GM12878 (cell line): ENCODE measurements at regions of chr4 and their contacts with region 1.

Region 1: GRCh38 chr4:17447675-17448298 is 64.1 kb downstream of the QDPR start:
- DNase-seq: peak; percentile 37
- ATAC-seq: peak; percentile 99
- H3K4me3 ChIP-seq: no peak overlapping the region
- H3K27ac ChIP-seq: no peak overlapping the region
- H3K4me1 ChIP-seq: no peaks in the 10 kb centered on the region
- H3K27me3 ChIP-seq: no peaks in the 10 kb centered on the region
- CTCF ChIP-seq: peak; percentile 69 to 74 (median 71); a peak in 5 of 6 replicates
- EP300 ChIP-seq: no peak
- POLR2A ChIP-seq: no peak
- RAD21 ChIP-seq: peak; percentile 84

Region 2: DNA sequence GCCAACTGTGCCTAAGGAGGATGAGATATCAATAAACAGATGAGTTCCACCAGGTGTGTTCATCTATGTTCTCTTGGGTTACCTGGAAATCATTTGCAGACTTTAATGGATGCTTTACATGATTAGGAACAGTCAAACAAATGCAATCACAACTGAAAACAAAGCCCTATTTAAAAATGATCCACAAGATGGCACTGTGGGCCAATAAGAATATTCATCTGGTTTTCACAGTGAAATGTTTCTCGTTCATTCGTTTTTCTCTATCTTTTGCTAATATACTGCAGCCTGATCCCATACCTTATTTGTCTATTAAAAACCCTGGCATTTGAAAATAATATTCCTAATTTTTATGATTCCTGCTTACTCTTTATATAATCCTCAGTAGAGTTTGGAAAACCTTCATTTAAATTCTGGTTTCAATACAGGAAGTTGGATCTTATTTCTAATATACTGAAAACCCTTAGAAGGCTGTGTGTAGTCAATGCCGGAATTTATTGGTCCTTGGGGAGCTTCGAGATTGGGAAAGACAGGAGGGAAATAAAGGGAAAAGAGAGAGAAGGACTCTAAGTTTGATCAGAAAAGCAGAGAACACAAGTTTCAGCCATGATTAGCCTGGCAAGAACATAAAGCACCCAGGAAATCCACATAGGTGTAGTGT is 1157.8 kb before region 1 on chr4:
- CTCF ChIA-PET with region 1: no interaction called
- POLR2A ChIA-PET with region 1: no interaction called
- RAD21 ChIA-PET with region 1: no interaction called
- SMC1A ChIA-PET with region 1: no interaction called
- in situ Hi-C with region 1: no loop called
- intact Hi-C with region 1: loop called (anchors 10 kb)
- DNase-seq: no peak
- ATAC-seq: peak; percentile 64
- H3K4me3 ChIP-seq: no peak overlapping the region
- H3K27ac ChIP-seq: no peak overlapping the region
- H3K4me1 ChIP-seq: no peaks in the 10 kb centered on the region
- H3K27me3 ChIP-seq: peaks cover 0 to 2% of the 10 kb centered on the region in 2 experiments; a peak in 1 of 4 replicates
- CTCF ChIP-seq: peak; percentile 36 to 59 (median 44); a peak in 4 of 6 replicates
- EP300 ChIP-seq: no peak
- POLR2A ChIP-seq: no peak
- RAD21 ChIP-seq: peak; percentile 68

Region 3: GRCh38 chr4:16916719-16917337 is 531.0 kb before region 1 on chr4:
- CTCF ChIA-PET with region 1: interaction called, 21 read pairs
- POLR2A ChIA-PET with region 1: no interaction called
- RAD21 ChIA-PET with region 1: interaction called, 13 read pairs
- SMC1A ChIA-PET with region 1: interaction called, 9 read pairs
- in situ Hi-C with region 1: no loop called
- intact Hi-C with region 1: loop called (anchors 1 kb)
- DNase-seq: peak; percentile 47
- ATAC-seq: peak; percentile 100
- H3K4me3 ChIP-seq: no peak overlapping the region
- H3K27ac ChIP-seq: no peak overlapping the region
- H3K4me1 ChIP-seq: no peaks in the 10 kb centered on the region
- H3K27me3 ChIP-seq: no peaks in the 10 kb centered on the region
- CTCF ChIP-seq: peak; percentile 96 to 98 (median 97)
- EP300 ChIP-seq: no peak
- POLR2A ChIP-seq: no peak
- RAD21 ChIP-seq: peak; percentile 66

Region 4: DNA sequence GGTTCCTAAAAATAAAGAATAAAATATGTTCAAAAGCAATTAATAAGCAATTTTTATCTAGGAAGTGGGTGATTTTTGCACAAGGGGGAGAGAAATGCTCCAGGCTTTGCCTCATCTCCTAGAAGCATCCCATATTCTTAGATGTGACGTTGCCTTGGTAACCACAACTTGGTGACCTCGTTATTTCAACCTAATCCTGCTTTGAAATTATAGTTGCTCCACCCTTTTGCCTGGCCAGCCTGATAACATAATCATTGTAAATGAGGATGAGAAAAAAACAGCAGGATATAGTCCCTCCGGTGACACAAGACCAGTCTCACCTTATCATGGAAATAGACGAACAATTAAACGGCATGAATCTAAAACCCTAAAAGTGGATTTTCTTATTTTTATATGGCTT is 130.3 kb before region 1 on chr4:
- CTCF ChIA-PET with region 1: interaction called, 11 read pairs
- POLR2A ChIA-PET with region 1: no interaction called
- RAD21 ChIA-PET with region 1: interaction called, 32 read pairs
- SMC1A ChIA-PET with region 1: interaction called, 28 read pairs
- in situ Hi-C with region 1: no loop called
- intact Hi-C with region 1: no loop called
- DNase-seq: no peak
- ATAC-seq: no peak
- H3K4me3 ChIP-seq: no peak overlapping the region
- H3K27ac ChIP-seq: no peak overlapping the region
- H3K4me1 ChIP-seq: no peaks in the 10 kb centered on the region
- H3K27me3 ChIP-seq: no peaks in the 10 kb centered on the region
- CTCF ChIP-seq: no peak
- EP300 ChIP-seq: no peak
- POLR2A ChIP-seq: no peak
- RAD21 ChIP-seq: no peak

Region 5: GRCh38 chr4:17336524-17336961 is 111.2 kb before region 1 on chr4:
- CTCF ChIA-PET with region 1: interaction called, 18 read pairs
- POLR2A ChIA-PET with region 1: no interaction called
- RAD21 ChIA-PET with region 1: interaction called, 14 read pairs
- SMC1A ChIA-PET with region 1: interaction called, 8 read pairs
- in situ Hi-C with region 1: no loop called
- intact Hi-C with region 1: no loop called
- DNase-seq: peak; percentile 93
- ATAC-seq: peak; percentile 93
- H3K4me3 ChIP-seq: no peak overlapping the region
- H3K27ac ChIP-seq: no peak overlapping the region
- H3K4me1 ChIP-seq: peaks cover 8% of the 10 kb centered on the region
- H3K27me3 ChIP-seq: no peaks in the 10 kb centered on the region
- CTCF ChIP-seq: no peak
- EP300 ChIP-seq: peak; percentile 84 to 92
- POLR2A ChIP-seq: no peak
- RAD21 ChIP-seq: no peak

Region 6: DNA sequence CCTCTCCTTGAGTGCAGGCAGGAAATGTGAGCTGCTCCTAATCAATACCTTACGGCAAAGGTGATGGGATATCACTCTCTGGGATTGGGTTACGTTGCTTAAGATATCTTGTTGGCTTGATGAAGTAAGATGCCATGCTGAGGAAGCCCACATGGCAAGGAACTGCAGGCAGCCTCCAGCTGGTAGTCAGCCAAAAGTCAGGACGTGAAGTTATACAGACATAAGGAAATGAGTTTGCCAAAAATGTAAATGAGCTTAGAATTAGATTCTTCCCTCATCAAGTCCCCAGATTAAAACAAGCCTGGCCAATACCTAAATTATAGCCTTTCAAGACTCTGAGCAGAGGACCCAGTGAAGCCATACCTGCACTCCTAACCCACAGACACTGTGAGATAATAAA is 90.9 kb before region 1 on chr4:
- CTCF ChIA-PET with region 1: interaction called, 12 read pairs
- POLR2A ChIA-PET with region 1: no interaction called
- RAD21 ChIA-PET with region 1: interaction called, 5 read pairs
- SMC1A ChIA-PET with region 1: interaction called, 6 read pairs
- in situ Hi-C with region 1: no loop called
- intact Hi-C with region 1: no loop called
- DNase-seq: no peak
- ATAC-seq: no peak
- H3K4me3 ChIP-seq: no peak overlapping the region
- H3K27ac ChIP-seq: no peak overlapping the region
- H3K4me1 ChIP-seq: no peaks in the 10 kb centered on the region
- H3K27me3 ChIP-seq: no peaks in the 10 kb centered on the region
- CTCF ChIP-seq: no peak
- EP300 ChIP-seq: no peak
- POLR2A ChIP-seq: no peak
- RAD21 ChIP-seq: no peak

Region 7: GRCh38 chr4:17688011-17688441 is 240.2 kb after region 1 on chr4:
- CTCF ChIA-PET with region 1: no interaction called
- POLR2A ChIA-PET with region 1: no interaction called
- RAD21 ChIA-PET with region 1: no interaction called
- SMC1A ChIA-PET with region 1: no interaction called
- in situ Hi-C with region 1: no loop called
- intact Hi-C with region 1: no loop called
- DNase-seq: no peak
- ATAC-seq: peak; percentile 55
- H3K4me3 ChIP-seq: no peak overlapping the region
- H3K27ac ChIP-seq: no peak overlapping the region
- H3K4me1 ChIP-seq: no peaks in the 10 kb centered on the region
- H3K27me3 ChIP-seq: no peaks in the 10 kb centered on the region
- CTCF ChIP-seq: no peak
- EP300 ChIP-seq: no peak
- POLR2A ChIP-seq: no peak
- RAD21 ChIP-seq: no peak

Region 8: DNA sequence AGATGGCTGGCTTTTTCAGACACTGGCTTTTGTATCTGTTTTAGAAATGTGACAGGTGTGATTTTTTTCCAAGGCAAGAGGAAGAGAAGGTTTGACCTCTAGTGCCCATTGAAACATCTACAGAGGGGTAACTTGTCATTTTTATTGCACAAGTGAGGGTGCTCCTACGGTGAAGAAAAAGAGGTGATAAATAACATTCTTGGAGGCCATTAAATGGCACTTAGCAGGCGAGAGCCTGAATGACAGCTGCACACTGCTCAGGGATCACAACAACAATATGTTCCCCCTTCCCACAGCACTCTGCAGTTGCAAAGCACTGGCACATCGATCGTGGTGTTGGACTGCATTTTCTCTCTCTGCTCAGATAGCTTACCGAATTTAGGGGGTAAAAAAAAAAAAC is 310.7 kb after region 1 on chr4:
- CTCF ChIA-PET with region 1: no interaction called
- POLR2A ChIA-PET with region 1: no interaction called
- RAD21 ChIA-PET with region 1: no interaction called
- SMC1A ChIA-PET with region 1: no interaction called
- in situ Hi-C with region 1: no loop called
- intact Hi-C with region 1: no loop called
- DNase-seq: no peak
- ATAC-seq: no peak
- H3K4me3 ChIP-seq: no peak overlapping the region
- H3K27ac ChIP-seq: no peak overlapping the region
- H3K4me1 ChIP-seq: no peaks in the 10 kb centered on the region
- H3K27me3 ChIP-seq: no peaks in the 10 kb centered on the region; a peak in 1 of 4 replicates
- CTCF ChIP-seq: no peak
- EP300 ChIP-seq: no peak
- POLR2A ChIP-seq: no peak
- RAD21 ChIP-seq: no peak